ENCODE measurements at regions of chr1 and their contacts with region 1.

Region 1: DNA sequence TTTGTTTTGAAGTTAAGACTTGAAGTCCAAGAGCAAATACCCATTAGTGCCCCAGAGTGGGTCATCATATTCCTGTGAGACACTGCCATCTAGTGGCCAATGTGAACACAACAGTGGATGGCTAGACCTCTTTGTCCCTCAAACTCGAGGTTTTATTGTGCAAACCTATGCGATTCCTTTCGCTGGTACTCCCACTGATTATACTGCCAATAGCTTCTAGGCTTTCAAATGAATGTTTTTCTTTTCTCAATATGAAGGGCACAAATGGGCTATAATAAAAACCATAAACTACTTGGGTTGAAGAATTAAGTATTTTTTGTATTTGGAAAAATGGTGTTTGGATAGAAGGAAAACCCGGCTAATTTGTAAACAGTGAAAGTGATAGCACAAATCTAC is 100.4 kb upstream of the ZNF281 start:
- DNase-seq: peak; percentile 28 to 79 (median 68)
- ATAC-seq: peak; percentile 73
- H3K4me3 ChIP-seq: no peak overlapping the region
- H3K4me3 Mint-ChIP-seq: no peak overlapping the region
- H3K27ac ChIP-seq: no peak overlapping the region
- H3K27ac Mint-ChIP-seq: no peak overlapping the region
- H3K4me1 ChIP-seq: no peaks in the 10 kb centered on the region
- H3K4me1 Mint-ChIP-seq: peaks cover 2% of the 10 kb centered on the region
- H3K27me3 ChIP-seq: no peaks in the 10 kb centered on the region
- H3K27me3 Mint-ChIP-seq: peaks cover 2% of the 10 kb centered on the region
- CTCF ChIP-seq: peak; percentile 97

Region 2: DNA sequence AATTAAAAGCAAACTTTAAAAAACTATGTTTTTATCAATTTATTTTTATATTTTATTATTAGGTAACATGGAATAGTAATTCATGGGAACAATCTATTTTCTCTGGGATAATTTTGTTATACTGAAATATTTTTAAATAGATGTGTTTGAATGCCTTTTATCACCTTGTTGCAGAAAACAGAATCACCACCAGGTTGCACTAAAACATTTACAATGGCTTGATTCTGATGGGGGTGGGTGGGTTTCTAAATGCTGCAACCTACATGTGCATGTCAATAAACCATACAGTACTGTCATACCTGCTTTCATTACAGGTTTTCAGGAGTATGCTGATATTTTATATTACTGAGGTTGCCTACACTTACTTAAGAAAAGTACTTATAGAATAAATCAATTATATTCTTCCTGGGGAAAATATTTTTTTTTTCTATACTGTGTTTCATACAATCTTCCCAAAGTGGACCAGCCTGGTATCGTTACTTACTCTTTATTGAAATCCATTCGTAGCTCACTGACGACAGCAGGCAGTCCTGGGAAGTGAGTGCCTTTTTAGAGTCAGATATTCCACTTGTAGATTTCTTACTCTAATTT is 1738.6 kb before region 1 on chr1:
- CTCF ChIA-PET with region 1: no interaction called
- POLR2A ChIA-PET with region 1: no interaction called
- intact Hi-C with region 1: loop called in 1 of 2 experiments (anchors 5 kb)
- DNase-seq: peak in 2 of 9 experiments; percentile 38 to 61
- ATAC-seq: no peak
- H3K4me3 ChIP-seq: no peak overlapping the region
- H3K4me3 Mint-ChIP-seq: no peak overlapping the region
- H3K27ac ChIP-seq: no peak overlapping the region
- H3K27ac Mint-ChIP-seq: no peak overlapping the region
- H3K4me1 ChIP-seq: no peaks in the 10 kb centered on the region
- H3K4me1 Mint-ChIP-seq: peaks cover 2% of the 10 kb centered on the region
- H3K27me3 ChIP-seq: no peaks in the 10 kb centered on the region
- H3K27me3 Mint-ChIP-seq: no peaks in the 10 kb centered on the region
- CTCF ChIP-seq: peak; percentile 65

Region 3: DNA sequence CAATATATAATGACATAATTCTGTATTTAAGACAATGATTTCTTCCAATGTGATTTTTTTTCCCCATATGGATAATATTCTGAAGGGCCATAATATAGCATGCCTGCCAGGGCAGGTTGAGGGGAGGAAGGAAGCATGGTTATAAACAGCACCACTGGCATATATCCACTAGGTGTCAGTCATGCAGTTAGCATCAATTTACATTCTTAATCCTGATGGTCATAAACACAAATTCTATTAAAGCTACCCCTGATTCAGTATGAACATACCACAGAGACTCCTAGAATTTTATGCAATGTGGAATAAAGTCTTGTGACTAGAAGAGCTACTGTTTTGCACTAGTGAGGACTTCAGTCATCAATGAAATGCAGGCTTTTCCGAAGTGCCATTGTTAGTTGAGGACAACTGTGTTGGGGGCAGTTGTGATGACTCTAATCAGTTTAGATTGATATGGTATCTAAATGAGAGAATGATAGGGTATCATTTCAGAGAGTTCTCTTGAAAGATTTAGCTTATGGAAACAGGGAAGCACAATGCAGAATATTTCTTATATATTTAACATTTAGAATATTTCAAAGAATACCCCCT is 825.4 kb before region 1 on chr1:
- CTCF ChIA-PET with region 1: interaction called, 24 read pairs
- POLR2A ChIA-PET with region 1: no interaction called
- intact Hi-C with region 1: loop called in 1 of 2 experiments (anchors 1 kb)
- DNase-seq: peak in 3 of 9 experiments; percentile 6 to 57 (median 45)
- ATAC-seq: peak; percentile 61
- H3K4me3 ChIP-seq: no peak overlapping the region
- H3K4me3 Mint-ChIP-seq: no peak overlapping the region
- H3K27ac ChIP-seq: no peak overlapping the region
- H3K27ac Mint-ChIP-seq: no peak overlapping the region
- H3K4me1 ChIP-seq: no peaks in the 10 kb centered on the region
- H3K4me1 Mint-ChIP-seq: no peaks in the 10 kb centered on the region
- H3K27me3 ChIP-seq: no peaks in the 10 kb centered on the region
- H3K27me3 Mint-ChIP-seq: peaks cover 8% of the 10 kb centered on the region
- CTCF ChIP-seq: peak; percentile 68

Region 4: GRCh38 chr1:199909135-199909534 is 601.1 kb before region 1 on chr1:
- CTCF ChIA-PET with region 1: no interaction called
- POLR2A ChIA-PET with region 1: no interaction called
- intact Hi-C with region 1: no loop called
- DNase-seq: no peak
- ATAC-seq: no peak
- H3K4me3 ChIP-seq: no peak overlapping the region
- H3K4me3 Mint-ChIP-seq: no peak overlapping the region
- H3K27ac ChIP-seq: no peak overlapping the region
- H3K27ac Mint-ChIP-seq: no peak overlapping the region
- H3K4me1 ChIP-seq: no peaks in the 10 kb centered on the region
- H3K4me1 Mint-ChIP-seq: no peaks in the 10 kb centered on the region
- H3K27me3 ChIP-seq: no peaks in the 10 kb centered on the region
- H3K27me3 Mint-ChIP-seq: no peaks in the 10 kb centered on the region
- CTCF ChIP-seq: no peak

Region 5: GRCh38 chr1:199954699-199955098 is 555.5 kb before region 1 on chr1:
- CTCF ChIA-PET with region 1: no interaction called
- POLR2A ChIA-PET with region 1: no interaction called
- intact Hi-C with region 1: loop called in 1 of 2 experiments (anchors 10 kb)
- DNase-seq: peak in 1 of 9 experiments; percentile 7
- ATAC-seq: no peak
- H3K4me3 ChIP-seq: no peak overlapping the region
- H3K4me3 Mint-ChIP-seq: no peak overlapping the region
- H3K27ac ChIP-seq: no peak overlapping the region
- H3K27ac Mint-ChIP-seq: no peak overlapping the region
- H3K4me1 ChIP-seq: no peaks in the 10 kb centered on the region
- H3K4me1 Mint-ChIP-seq: no peaks in the 10 kb centered on the region
- H3K27me3 ChIP-seq: no peaks in the 10 kb centered on the region
- H3K27me3 Mint-ChIP-seq: peaks cover 4% of the 10 kb centered on the region
- CTCF ChIP-seq: no peak

Region 6: GRCh38 chr1:200139661-200140250 is 370.5 kb before region 1 on chr1:
- CTCF ChIA-PET with region 1: interaction called, 3 read pairs
- POLR2A ChIA-PET with region 1: no interaction called
- intact Hi-C with region 1: loop called (anchors 2 to 5 kb)
- DNase-seq: peak in 3 of 9 experiments; percentile 15 to 70 (median 67)
- ATAC-seq: peak; percentile 74
- H3K4me3 ChIP-seq: no peak overlapping the region
- H3K4me3 Mint-ChIP-seq: no peak overlapping the region
- H3K27ac ChIP-seq: no peak overlapping the region
- H3K27ac Mint-ChIP-seq: no peak overlapping the region
- H3K4me1 ChIP-seq: no peaks in the 10 kb centered on the region
- H3K4me1 Mint-ChIP-seq: no peaks in the 10 kb centered on the region
- H3K27me3 ChIP-seq: no peaks in the 10 kb centered on the region
- H3K27me3 Mint-ChIP-seq: no peaks in the 10 kb centered on the region
- CTCF ChIP-seq: peak; percentile 71

Region 7: DNA sequence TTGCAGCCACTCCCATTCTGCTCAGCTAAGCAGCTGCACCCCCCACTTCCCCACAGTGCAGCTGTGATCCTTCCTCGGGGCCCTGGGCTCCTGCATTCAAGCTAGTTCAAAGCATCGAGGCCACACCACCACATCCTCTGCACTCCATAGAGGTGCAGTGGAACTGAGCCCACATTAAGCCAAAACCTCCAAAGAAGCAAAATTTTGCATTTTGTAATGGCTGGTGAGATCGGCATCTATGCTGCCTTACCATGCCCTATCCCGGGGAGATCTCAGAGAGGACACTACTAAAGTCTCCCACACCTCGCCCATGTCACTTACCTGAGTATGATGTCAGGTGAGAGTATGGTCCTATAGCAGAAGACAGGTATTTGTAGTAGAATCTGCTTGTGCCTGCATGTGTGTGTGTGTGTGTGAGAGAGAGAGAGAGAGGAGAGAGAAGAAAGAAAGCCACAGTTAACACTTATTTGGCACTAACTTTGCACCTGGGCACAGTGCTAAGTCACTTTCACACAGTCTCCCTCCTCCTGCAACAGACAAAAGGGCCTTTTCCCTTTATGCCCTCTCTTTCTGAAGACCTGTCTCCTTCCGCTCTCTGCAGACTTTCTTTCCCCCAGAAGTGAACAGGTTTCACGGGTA is 20.5 kb after region 1 on chr1:
- CTCF ChIA-PET with region 1: interaction called, 11 read pairs
- POLR2A ChIA-PET with region 1: interaction called, 3 read pairs
- intact Hi-C with region 1: no loop called
- DNase-seq: peak; percentile 36 to 85 (median 55)
- ATAC-seq: peak; percentile 96
- H3K4me3 ChIP-seq: peak overlapping the region; percentile 12 to 27
- H3K4me3 Mint-ChIP-seq: peak overlapping the region; percentile 71
- H3K27ac ChIP-seq: peak overlapping the region; percentile 2 to 14
- H3K27ac Mint-ChIP-seq: peak overlapping the region; percentile 83
- H3K4me1 ChIP-seq: peaks cover 32% of the 10 kb centered on the region
- H3K4me1 Mint-ChIP-seq: peaks cover 40% of the 10 kb centered on the region
- H3K27me3 ChIP-seq: no peaks in the 10 kb centered on the region
- H3K27me3 Mint-ChIP-seq: no peaks in the 10 kb centered on the region
- CTCF ChIP-seq: no peak

Measured in CD8-positive, alpha-beta T cell (primary cell).